CD8-positive, alpha-beta T cell (primary cell): ENCODE measurements at regions of chr17 and their contacts with region 1.

Region 1: GRCh38 chr17:4806777-4807604 is at the start of gene PLD2:
- DNase-seq: peak; percentile 60 to 93 (median 85)
- ATAC-seq: peak; percentile 98
- H3K4me3 ChIP-seq: peak within 1 kb of the TSS; percentile 56 to 58
- H3K4me3 Mint-ChIP-seq: peak within 1 kb of the TSS; percentile 81
- H3K27ac ChIP-seq: peak within 1 kb of the TSS in 1 of 2 experiments; percentile 39
- H3K27ac Mint-ChIP-seq: no peak within 1 kb of the TSS
- H3K4me1 ChIP-seq: peaks cover 11% of the 10 kb centered on the region
- H3K4me1 Mint-ChIP-seq: peaks cover 19% of the 10 kb centered on the region
- H3K27me3 ChIP-seq: no peaks in the 10 kb centered on the region
- H3K27me3 Mint-ChIP-seq: no peaks in the 10 kb centered on the region
- CTCF ChIP-seq: no peak
- total RNA-seq, gene PLD2: 14.3 to 15.7 TPM

Region 2: DNA sequence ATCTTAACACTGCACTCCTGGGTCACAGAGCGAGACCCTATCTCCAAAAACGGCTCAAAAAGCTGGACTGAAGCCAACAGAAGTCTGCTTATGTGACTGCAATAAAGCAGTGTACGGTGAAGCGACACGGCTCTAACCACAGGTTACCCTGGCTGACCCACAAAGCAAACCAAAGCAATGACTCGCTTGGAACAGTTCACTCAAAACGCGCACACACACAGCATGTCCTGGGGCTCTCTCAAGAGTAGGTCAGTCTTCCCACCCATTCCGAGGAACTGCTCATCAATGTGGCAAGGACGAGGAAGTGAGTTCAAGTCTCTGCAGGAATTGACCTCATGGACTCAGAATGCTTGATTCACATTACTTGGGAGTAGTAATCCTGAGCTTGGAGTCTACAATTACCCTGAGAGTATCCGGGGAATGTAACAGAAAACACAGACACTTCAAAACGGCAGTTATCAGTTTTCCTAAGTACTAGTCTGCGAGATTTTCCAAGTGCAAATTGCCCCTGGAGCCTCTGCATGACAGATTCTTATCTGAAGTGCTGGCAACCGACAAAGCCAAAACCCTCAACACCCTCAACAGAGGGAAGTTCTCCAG is 128.5 kb before region 1 on chr17:
- CTCF ChIA-PET with region 1: no interaction called
- POLR2A ChIA-PET with region 1: no interaction called
- intact Hi-C with region 1: no loop called
- DNase-seq: no peak
- ATAC-seq: no peak
- H3K4me3 ChIP-seq: no peak overlapping the region
- H3K4me3 Mint-ChIP-seq: no peak overlapping the region
- H3K27ac ChIP-seq: no peak overlapping the region
- H3K27ac Mint-ChIP-seq: no peak overlapping the region
- H3K4me1 ChIP-seq: no peaks in the 10 kb centered on the region
- H3K4me1 Mint-ChIP-seq: no peaks in the 10 kb centered on the region
- H3K27me3 ChIP-seq: no peaks in the 10 kb centered on the region
- H3K27me3 Mint-ChIP-seq: no peaks in the 10 kb centered on the region
- CTCF ChIP-seq: no peak

Region 3: GRCh38 chr17:4733073-4733531 is 73.9 kb before region 1 on chr17:
- CTCF ChIA-PET with region 1: no interaction called
- POLR2A ChIA-PET with region 1: no interaction called
- intact Hi-C with region 1: loop called in 1 of 2 experiments (anchors 1 kb)
- DNase-seq: peak in 1 of 9 experiments; percentile 45
- ATAC-seq: no peak
- H3K4me3 ChIP-seq: no peak overlapping the region
- H3K4me3 Mint-ChIP-seq: peak overlapping the region; percentile 39
- H3K27ac ChIP-seq: no peak overlapping the region
- H3K27ac Mint-ChIP-seq: no peak overlapping the region
- H3K4me1 ChIP-seq: peaks cover 24% of the 10 kb centered on the region
- H3K4me1 Mint-ChIP-seq: peaks cover 30% of the 10 kb centered on the region
- H3K27me3 ChIP-seq: no peaks in the 10 kb centered on the region
- H3K27me3 Mint-ChIP-seq: no peaks in the 10 kb centered on the region
- CTCF ChIP-seq: no peak

Region 4: GRCh38 chr17:4796553-4796921 is 10.5 kb before region 1 on chr17:
- CTCF ChIA-PET with region 1: interaction called, 3 read pairs
- POLR2A ChIA-PET with region 1: interaction called, 10 read pairs
- intact Hi-C with region 1: loop called (anchors 1 kb)
- DNase-seq: peak in 2 of 9 experiments; percentile 20 to 28
- ATAC-seq: no peak
- H3K4me3 ChIP-seq: peak overlapping the region; percentile 70 to 73
- H3K4me3 Mint-ChIP-seq: peak overlapping the region; percentile 99
- H3K27ac ChIP-seq: peak overlapping the region; percentile 53 to 67
- H3K27ac Mint-ChIP-seq: peak overlapping the region; percentile 97
- H3K4me1 ChIP-seq: peaks cover 7% of the 10 kb centered on the region
- H3K4me1 Mint-ChIP-seq: peaks cover 13% of the 10 kb centered on the region
- H3K27me3 ChIP-seq: no peaks in the 10 kb centered on the region
- H3K27me3 Mint-ChIP-seq: peaks cover 2% of the 10 kb centered on the region
- CTCF ChIP-seq: no peak

Region 5: DNA sequence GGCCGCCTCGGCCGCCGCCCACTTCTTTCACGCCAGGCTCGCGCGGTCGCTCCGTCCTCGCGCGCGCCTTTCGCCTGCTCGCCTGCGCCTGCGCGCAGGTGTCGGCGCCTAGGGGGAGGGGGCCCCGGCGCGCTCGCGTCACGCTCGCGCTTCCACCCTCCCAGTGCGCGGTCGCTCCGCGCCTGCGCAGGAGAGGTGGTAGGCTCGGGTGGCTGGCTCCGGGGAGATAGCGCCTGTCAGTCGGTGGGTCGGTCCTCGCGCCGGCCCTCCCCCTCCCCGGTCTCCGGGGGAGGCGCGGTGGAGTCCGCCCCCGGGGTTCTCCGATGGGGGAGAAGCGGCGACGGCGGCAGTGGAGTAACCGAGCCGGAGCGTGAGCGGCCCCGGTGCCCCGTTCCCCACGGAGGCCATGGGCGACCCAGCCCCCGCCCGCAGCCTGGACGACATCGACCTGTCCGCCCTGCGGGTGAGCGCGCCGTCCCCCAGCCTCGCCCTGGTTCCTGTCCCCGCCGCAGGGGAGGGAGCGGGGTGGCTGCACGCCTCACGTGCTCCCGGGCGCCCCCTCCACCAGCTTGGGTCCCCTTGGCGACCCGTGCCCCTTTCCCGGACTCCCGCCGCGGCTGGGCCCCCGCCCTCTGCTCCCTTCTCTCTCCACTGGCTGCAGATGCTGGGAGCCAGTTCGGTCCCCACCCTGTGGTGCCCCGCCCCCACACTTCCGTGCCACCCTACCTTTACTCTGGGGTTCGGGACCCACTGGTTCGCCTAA is 26.4 kb after region 1 on chr17 and contains the start of gene MINK1:
- CTCF ChIA-PET with region 1: interaction called, 4 read pairs
- POLR2A ChIA-PET with region 1: no interaction called
- intact Hi-C with region 1: loop called (anchors 1 kb)
- DNase-seq: peak; percentile 75 to 98 (median 88)
- ATAC-seq: peak; percentile 93
- H3K4me3 ChIP-seq: peak within 1 kb of the TSS; percentile 75 to 77
- H3K4me3 Mint-ChIP-seq: peak within 1 kb of the TSS; percentile 91
- H3K27ac ChIP-seq: peak within 1 kb of the TSS; percentile 73 to 80
- H3K27ac Mint-ChIP-seq: peak within 1 kb of the TSS; percentile 90
- H3K4me1 ChIP-seq: peaks cover 26% of the 10 kb centered on the region
- H3K4me1 Mint-ChIP-seq: peaks cover 39% of the 10 kb centered on the region
- H3K27me3 ChIP-seq: no peaks in the 10 kb centered on the region
- H3K27me3 Mint-ChIP-seq: peaks cover 6% of the 10 kb centered on the region
- CTCF ChIP-seq: no peak
- total RNA-seq, gene MINK1: 85.9 to 86.0 TPM

Region 6: GRCh38 chr17:4852567-4853207 is 45.7 kb after region 1 on chr17:
- CTCF ChIA-PET with region 1: no interaction called
- POLR2A ChIA-PET with region 1: no interaction called
- intact Hi-C with region 1: loop called in 1 of 2 experiments (anchors 1 kb)
- DNase-seq: peak in 4 of 9 experiments; percentile 12 to 82 (median 57)
- ATAC-seq: peak; percentile 63
- H3K4me3 ChIP-seq: no peak overlapping the region
- H3K4me3 Mint-ChIP-seq: no peak overlapping the region
- H3K27ac ChIP-seq: peak overlapping the region in 1 of 2 experiments; percentile 50
- H3K27ac Mint-ChIP-seq: no peak overlapping the region
- H3K4me1 ChIP-seq: peaks cover 15% of the 10 kb centered on the region
- H3K4me1 Mint-ChIP-seq: peaks cover 33% of the 10 kb centered on the region
- H3K27me3 ChIP-seq: no peaks in the 10 kb centered on the region
- H3K27me3 Mint-ChIP-seq: no peaks in the 10 kb centered on the region
- CTCF ChIP-seq: no peak

Region 7: DNA sequence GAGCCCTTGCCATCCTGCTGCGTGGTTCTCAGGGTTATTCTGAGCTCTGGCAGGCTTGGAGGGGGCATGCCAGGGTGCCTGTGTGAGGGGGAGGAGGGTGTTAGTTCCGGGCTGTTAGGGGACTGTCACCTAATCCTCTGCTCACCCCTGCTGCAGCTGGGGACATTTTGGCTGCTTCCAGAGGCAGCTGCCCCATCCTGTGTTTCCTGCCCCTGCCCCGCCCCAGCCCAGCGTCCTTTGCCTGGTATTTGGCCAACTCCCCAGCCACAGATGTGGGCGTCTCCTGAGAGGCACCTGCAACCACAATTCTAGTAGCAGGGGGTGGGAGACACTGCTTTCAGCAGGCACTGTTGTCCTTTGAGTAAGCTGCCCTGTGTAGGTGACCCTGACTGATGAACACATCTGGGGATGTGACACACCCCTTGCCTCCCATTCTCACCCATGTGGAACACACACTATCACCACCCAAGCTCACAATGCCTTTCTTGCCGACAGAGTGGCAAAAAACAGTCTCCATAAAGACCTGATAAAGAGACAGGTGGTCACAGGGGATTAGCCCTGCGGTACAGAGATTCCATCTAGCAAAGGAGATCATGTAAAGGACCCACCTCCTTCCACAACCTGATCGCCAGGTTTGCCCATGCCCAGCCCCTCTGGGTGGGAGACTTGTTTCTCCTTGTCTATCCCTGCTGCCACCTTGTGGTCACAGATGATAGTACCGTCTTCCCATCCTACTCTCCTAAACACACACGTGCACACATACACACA is 96.2 kb after region 1 on chr17 and contains the start of gene CHRNE:
- CTCF ChIA-PET with region 1: no interaction called
- POLR2A ChIA-PET with region 1: no interaction called
- intact Hi-C with region 1: loop called in 1 of 2 experiments (anchors 1 kb)
- DNase-seq: peak; percentile 52 to 92 (median 79)
- ATAC-seq: peak; percentile 25
- H3K4me3 ChIP-seq: peak within 1 kb of the TSS; percentile 14 to 27
- H3K4me3 Mint-ChIP-seq: peak within 1 kb of the TSS; percentile 48
- H3K27ac ChIP-seq: peak within 1 kb of the TSS in 1 of 2 experiments; percentile 50
- H3K27ac Mint-ChIP-seq: peak within 1 kb of the TSS; percentile 76
- H3K4me1 ChIP-seq: peaks cover 51% of the 10 kb centered on the region
- H3K4me1 Mint-ChIP-seq: peaks cover 38% of the 10 kb centered on the region
- H3K27me3 ChIP-seq: no peaks in the 10 kb centered on the region
- H3K27me3 Mint-ChIP-seq: no peaks in the 10 kb centered on the region
- CTCF ChIP-seq: peak; percentile 94
- total RNA-seq, gene CHRNE: 5.5 to 6.1 TPM

Region 8: DNA sequence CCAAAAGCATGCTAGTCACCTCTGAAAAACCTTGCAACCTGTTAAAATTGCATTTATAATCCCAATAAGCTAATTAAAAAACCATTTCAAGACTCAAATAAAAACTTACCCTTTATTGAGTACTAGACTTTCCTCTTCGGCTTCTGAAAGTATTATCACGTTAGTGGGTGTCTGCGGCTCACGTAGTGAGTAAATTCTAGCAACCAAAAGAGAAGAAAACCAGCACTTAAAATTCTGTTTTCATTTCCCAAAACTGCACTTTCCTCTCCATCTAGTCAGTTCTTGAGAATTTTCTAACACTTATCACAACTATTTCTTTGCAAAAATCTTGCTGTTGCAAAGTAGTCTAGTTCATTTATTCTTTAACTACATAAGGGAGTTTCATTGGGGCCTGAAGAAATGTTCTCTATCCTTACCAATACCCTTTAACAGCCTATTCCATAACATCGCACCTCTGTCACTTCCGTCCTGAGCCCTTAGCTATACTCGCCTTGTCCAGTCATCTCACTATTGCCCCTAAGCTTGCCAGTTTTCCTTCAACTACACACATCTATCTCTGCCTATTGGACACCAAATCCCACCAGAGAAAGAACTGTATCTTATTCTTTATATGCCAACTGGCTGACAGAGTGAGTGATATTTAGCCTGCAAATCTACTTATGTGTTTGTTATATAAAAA is 603.7 kb after region 1 on chr17:
- CTCF ChIA-PET with region 1: no interaction called
- POLR2A ChIA-PET with region 1: no interaction called
- intact Hi-C with region 1: no loop called
- DNase-seq: no peak
- ATAC-seq: no peak
- H3K4me3 ChIP-seq: no peak overlapping the region
- H3K4me3 Mint-ChIP-seq: no peak overlapping the region
- H3K27ac ChIP-seq: no peak overlapping the region
- H3K27ac Mint-ChIP-seq: peak overlapping the region; percentile 34
- H3K4me1 ChIP-seq: peaks cover 12% of the 10 kb centered on the region
- H3K4me1 Mint-ChIP-seq: peaks cover 35% of the 10 kb centered on the region
- H3K27me3 ChIP-seq: no peaks in the 10 kb centered on the region
- H3K27me3 Mint-ChIP-seq: no peaks in the 10 kb centered on the region
- CTCF ChIP-seq: no peak